ENCODE measurements at regions of chr7 and their contacts with region 1.

Region 1: GRCh38 chr7:7103343-7104313 is 78.7 kb upstream of the C1GALT1 start:
- DNase-seq: no peak
- H3K4me3 ChIP-seq: peak overlapping the region in 9 of 59 donors; percentile 2 to 25 (median 10)
- H3K27ac ChIP-seq: no peak overlapping the region
- H3K27me3 ChIP-seq: no peaks in the 10 kb centered on the region
- CTCF ChIP-seq: peak; percentile 49 to 83 (median 72)

Region 2: DNA sequence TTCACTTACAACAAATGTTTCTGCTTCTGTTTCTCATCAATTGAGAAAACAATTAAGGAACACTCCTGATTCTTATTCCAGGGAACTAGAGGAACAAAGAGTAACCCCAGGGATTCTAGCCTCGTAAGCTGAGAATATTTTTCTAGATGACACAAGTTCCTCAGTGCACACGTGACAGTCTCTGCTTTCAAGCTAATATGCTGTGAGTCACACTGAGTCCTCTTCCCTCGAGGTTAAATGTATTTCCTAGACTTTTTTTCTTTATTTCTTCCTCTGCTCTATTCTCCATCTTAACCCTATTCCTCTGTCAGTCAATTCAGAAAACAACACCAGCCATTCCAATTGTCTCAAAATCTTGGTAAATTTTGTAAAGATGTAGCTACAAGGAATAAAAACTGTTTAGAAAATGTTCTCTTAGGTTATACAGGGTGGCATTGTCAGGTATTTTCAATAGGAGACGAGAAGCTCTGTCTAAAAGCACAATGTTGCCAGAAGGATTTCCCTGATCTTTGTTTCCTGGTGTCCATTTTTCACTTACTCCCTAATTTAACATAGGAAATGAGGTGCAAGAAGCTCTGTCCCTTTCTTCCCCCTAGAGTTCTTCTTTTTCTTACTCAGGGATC is 72.9 kb after region 1 on chr7:
- intact Hi-C with region 1: loop called in 1 of 2 experiments (anchors 10 kb)
- DNase-seq: no peak
- H3K4me3 ChIP-seq: no peak overlapping the region
- H3K27ac ChIP-seq: peak overlapping the region in 4 of 59 donors; percentile 8 to 17 (median 13)
- H3K27me3 ChIP-seq: no peaks in the 10 kb centered on the region
- CTCF ChIP-seq: no peak

Region 3: DNA sequence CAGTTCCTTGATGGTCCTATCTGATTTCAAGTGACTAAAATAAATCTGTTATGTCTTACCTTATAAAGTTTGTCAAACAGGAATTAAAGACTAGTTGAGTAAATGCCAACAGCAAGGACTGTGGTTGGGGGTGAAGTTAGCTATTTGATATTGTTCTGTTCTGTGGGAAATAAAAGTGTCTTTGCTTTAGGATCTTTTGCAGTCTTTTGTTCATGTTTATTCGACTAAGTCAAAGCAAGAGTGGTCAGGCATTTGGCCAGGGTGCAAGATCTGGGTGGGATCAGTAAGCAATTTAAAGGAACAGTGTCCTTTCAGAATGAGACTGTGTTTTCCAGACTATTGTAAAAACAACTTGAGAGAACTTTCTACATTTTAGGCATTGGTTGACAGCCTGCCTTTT is 432.1 kb after region 1 on chr7 and contains the start of gene COL28A1:
- intact Hi-C with region 1: loop called (anchors 5 kb)
- DNase-seq: no peak
- H3K4me3 ChIP-seq: no peak within 1 kb of the TSS
- H3K27ac ChIP-seq: no peak within 1 kb of the TSS
- H3K27me3 ChIP-seq: no peaks in the 10 kb centered on the region
- CTCF ChIP-seq: no peak
- total RNA-seq, gene COL28A1: 2.3 to 11.2 (median 5.6) TPM

Region 4: GRCh38 chr7:7542251-7542835 is 438.7 kb after region 1 on chr7:
- intact Hi-C with region 1: loop called (anchors 5 kb)
- DNase-seq: no peak
- H3K4me3 ChIP-seq: no peak overlapping the region
- H3K27ac ChIP-seq: no peak overlapping the region
- H3K27me3 ChIP-seq: no peaks in the 10 kb centered on the region
- CTCF ChIP-seq: no peak